ENCODE measurements at regions of chr5 and their contacts with region 1.

Region 1: DNA sequence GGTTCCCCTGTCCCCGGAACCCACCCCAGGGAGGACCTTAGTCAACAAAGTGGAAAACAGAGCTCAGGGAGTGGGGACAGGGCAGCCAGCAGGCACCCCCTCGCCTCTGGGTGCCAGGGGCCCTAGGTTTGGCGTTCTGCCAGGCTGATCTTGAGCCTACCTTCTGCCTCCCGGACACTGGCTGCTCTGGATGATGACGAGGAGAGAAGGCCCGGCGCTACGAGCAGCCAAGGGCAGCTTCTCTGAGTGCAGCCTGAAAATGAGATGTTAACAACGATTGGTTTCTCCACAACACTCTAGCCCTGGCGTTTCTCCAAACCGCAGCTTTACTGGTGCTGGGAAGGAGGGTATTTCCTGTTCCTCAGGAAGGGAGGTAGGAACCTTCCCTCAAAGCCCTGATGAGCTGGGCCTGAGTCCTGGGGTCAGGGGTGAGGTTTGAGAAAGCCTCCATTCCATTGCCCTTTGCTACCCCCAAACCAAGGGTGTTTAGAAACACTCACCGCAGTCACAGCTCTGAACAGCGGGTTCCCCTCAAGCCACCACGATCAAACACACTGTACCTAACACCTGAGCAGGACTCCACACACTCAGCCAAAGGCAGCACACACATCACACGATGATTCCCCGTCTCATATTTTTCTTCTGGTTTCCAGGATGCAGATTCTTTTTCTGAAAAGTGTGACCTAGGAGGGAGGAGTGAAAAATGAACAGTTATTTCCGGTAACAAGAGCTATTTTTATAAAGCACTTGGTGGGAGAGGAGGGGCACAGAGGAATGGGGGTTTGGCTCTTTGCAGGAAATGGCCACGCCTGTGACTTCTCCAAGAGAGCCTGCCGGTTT is at the start of gene STING1:
- DNase-seq: peak; percentile 80
- H3K4me3 Mint-ChIP-seq: peak within 1 kb of the TSS; percentile 87
- H3K27ac Mint-ChIP-seq: peak within 1 kb of the TSS; percentile 97
- H3K4me1 Mint-ChIP-seq: peaks cover 47% of the 10 kb centered on the region
- H3K27me3 Mint-ChIP-seq: no peaks in the 10 kb centered on the region

Region 2: DNA sequence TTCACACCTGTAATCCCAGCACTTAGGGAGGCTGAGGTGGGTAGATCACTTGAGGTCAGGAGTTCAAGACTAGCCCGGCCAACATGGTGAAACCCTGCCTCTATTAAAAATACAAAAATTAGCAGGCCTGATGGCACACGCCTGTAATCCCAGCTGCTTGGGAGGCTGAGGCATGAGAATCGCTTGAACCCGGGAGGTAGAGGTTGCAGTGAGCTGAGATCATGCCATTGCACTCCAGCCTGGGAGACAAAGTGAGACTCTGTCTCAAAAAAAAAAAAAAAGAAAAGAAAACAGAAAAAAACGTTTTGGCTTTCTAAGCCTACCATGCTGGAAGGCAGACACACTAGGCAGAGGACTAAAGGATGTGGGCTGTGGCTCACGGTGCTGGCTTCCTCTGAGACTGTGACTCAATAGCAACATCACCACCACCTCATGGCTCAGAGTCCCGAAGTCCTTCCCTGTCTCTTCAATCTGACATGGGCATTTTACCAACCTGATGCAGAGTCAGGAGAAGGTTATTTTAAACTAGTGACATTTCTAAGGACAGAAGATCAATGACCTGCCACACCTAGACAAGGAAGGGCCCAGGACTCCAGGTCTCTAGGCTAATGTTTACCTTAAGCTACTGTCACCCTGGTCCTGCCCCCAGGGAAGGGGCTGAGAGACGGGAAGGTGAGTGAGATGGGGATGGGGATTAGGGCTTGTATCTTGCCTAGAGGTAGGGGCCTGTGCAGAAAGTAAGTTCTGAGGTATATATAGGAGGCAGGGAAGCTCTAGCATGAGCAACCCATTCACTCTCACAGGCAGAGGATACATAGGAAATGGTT is 23.5 kb before region 1 on chr5:
- CTCF ChIA-PET with region 1: interaction called, 12 read pairs
- DNase-seq: peak; percentile 90
- H3K4me3 Mint-ChIP-seq: peak overlapping the region; percentile 48
- H3K27ac Mint-ChIP-seq: peak overlapping the region; percentile 91
- H3K4me1 Mint-ChIP-seq: peaks cover 74% of the 10 kb centered on the region
- H3K27me3 Mint-ChIP-seq: peaks cover 10% of the 10 kb centered on the region

Region 3: DNA sequence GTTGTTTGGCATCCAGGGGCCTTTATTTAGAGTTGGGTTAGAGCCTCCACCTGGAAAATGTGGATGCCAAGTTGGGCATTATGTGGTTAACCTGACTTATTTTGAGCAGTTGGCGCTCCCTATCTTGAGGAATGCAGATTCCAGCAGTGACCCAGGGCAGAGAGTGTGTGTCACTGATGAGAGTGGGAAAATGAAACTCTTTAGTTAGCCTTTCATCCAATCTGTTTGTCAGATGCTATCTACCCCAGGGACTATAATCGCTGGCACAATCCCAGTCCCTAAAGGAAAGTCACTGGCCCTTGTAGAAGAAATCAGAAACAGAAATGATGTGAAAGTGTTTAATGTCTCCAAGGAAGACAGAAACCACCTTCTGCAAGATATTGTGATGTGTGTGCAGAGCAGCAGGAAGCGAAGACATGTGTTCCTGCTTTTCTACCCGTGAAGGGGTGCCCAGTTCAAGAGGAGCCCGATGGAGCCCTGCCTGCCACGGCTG is 10.5 kb after region 1 on chr5:
- CTCF ChIA-PET with region 1: interaction called, 13 read pairs
- DNase-seq: no peak
- H3K4me3 Mint-ChIP-seq: peak overlapping the region; percentile 33
- H3K27ac Mint-ChIP-seq: peak overlapping the region; percentile 47
- H3K4me1 Mint-ChIP-seq: peaks cover 27% of the 10 kb centered on the region
- H3K27me3 Mint-ChIP-seq: no peaks in the 10 kb centered on the region

Measured in activated naive CD4-positive, alpha-beta T cell treated with anti-CD3 and anti-CD28 coated beads, Interleukin-2, amount 10 ng/mL, durations not matched to agents 7 days and 5 days (primary cell).